AG04449 (cell line): ENCODE measurements at regions of chr1 and their contacts with region 1.

Region 1: GRCh38 chr1:30718636-30719405 is 4.6 kb downstream of the MATN1 start:
- DNase-seq: peak; percentile 86
- H3K4me3 ChIP-seq: peak overlapping the region; percentile 69
- CTCF ChIP-seq: peak; percentile 86

Region 2: GRCh38 chr1:30707412-30708360 is 11.1 kb before region 1 on chr1:
- CTCF ChIA-PET with region 1: interaction called, 26 read pairs
- POLR2A ChIA-PET with region 1: no interaction called
- DNase-seq: no peak
- H3K4me3 ChIP-seq: no peak overlapping the region
- CTCF ChIP-seq: peak; percentile 89

Region 3: DNA sequence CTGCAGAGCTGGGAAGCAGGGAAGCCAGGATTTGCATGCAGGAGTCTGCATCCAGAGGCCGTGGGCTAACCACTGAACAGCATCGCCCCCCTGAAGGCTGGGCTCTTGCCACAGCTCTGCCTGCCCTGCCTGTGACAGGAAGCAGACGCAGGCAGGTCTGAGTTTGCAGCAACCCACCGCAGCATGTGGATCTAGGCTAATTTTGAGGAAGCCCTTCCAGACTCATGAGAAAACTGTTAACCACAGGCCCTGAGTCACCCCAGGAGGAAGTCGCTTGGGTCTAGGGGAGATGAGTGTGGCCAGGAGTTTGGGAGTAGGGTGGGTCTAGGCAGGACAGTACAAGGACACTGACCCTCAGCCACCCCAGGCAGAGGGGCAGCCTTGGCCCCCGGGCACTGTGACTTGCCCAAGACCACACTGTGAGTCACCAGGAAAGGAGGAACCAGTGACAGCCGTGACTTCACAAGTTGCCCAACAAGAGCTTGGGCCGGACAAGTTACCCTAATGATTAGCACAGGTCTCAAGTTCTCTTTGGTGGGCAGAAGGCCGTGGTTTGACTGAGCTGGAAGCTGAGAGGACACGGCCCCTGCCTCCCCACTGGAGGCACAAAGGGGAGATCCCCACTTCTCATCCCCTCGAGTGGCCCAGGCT is 37.8 kb after region 1 on chr1:
- CTCF ChIA-PET with region 1: interaction called, 56 read pairs
- POLR2A ChIA-PET with region 1: no interaction called
- DNase-seq: peak; percentile 50
- H3K4me3 ChIP-seq: no peak overlapping the region
- CTCF ChIP-seq: no peak

Region 4: GRCh38 chr1:30768830-30769718 is 50.3 kb after region 1 on chr1:
- CTCF ChIA-PET with region 1: interaction called, 943 read pairs
- POLR2A ChIA-PET with region 1: interaction called, 4 read pairs
- DNase-seq: no peak
- H3K4me3 ChIP-seq: no peak overlapping the region
- CTCF ChIP-seq: no peak

Region 5: DNA sequence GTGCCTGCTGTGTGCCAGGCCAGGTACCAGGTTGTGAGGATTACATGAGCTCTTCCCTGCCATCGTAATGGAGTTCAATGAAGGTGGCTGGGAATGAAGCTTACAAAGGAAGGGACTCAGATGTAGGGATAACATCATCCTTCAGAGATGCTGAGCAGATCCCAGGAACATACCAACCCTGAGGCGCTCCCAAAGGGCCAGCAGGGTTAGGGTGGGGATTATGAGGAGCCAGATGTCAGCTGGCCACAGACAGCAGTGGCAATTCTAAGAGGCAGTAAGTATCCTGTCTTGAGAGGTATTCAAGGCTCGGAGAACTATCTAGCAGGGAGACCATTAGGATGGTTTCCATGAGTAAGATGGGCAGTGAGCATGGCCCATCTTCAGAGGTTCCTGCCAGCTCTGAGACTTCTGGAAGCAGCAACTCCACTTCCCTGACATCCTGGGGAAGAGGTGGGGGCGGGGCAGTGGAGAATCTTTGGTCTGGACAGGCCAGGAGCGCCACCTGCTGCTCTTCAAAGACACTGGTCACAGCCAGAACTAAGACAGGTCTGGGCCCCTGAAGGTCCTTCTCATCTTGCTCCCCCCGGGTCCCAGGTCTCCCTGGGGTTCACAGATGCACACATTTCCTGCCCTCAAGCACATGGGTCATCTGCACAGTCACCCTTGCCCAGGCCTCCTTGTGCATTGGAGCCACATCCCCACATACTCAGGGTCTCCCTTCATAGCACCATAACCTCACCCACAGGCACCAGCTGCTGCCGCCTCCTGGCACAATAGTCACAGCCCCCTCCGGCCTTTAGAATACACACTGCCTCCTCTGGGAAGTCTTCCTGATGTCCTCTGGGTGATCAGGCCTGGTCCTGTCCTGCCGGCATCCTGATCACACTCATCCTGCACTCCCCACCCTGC is 192.5 kb after region 1 on chr1:
- CTCF ChIA-PET with region 1: interaction called, 110 read pairs
- POLR2A ChIA-PET with region 1: no interaction called
- DNase-seq: no peak
- H3K4me3 ChIP-seq: no peak overlapping the region
- CTCF ChIP-seq: peak; percentile 94

Region 6: GRCh38 chr1:30929135-30929889 is 210.5 kb after region 1 on chr1:
- CTCF ChIA-PET with region 1: interaction called, 24 read pairs
- POLR2A ChIA-PET with region 1: no interaction called
- DNase-seq: no peak
- H3K4me3 ChIP-seq: no peak overlapping the region
- CTCF ChIP-seq: peak; percentile 61

Region 7: DNA sequence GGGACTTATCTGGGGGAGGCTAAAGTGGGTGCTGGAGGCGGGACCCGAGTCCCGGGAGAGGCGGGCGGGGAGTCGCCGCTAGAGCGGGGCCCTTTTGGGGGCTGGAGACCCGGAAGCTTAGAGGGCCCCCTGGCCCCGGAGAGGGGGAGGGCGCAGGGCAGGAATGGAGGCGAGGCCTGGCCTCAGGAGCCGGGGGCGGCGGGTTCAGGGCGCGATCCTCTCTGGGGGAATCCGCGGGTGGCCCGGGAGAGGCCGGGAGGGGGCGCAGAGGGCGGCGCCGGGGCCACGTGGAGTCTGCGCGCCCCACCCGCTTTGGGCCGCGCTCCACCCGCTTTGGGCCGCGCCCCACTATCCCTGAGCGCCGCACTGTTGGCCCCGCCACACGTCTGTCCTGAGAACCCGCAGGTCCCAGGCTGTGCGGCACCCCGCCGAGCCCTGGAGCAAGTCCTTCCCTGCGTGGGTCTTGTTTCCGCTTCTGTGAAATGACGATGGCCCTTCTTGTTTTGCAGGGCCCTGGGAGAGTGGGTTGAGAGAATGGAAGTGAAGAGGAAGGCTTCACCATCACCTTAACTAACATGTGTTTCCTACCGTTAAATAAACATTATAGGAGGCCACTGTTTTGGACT is 436.5 kb after region 1 on chr1:
- CTCF ChIA-PET with region 1: no interaction called
- POLR2A ChIA-PET with region 1: no interaction called
- DNase-seq: no peak
- H3K4me3 ChIP-seq: peak overlapping the region; percentile 55
- CTCF ChIP-seq: peak; percentile 31